ENCODE measurements at regions of chr10 and their contacts with region 1.

Region 1: GRCh38 chr10:91632671-91633550 is at the start of gene PPP1R3C:
- DNase-seq: peak; percentile 73 to 90
- H3K4me3 ChIP-seq: peak within 1 kb of the TSS; percentile 23 to 55 (median 36)
- H3K27ac ChIP-seq: no peak within 1 kb of the TSS
- H3K4me1 ChIP-seq: peaks cover 0 to 3% (median 3%) of the 10 kb centered on the region in 4 experiments; a peak in 2 of 7 replicates
- H3K27me3 ChIP-seq: peaks cover 4 to 25% (median 20%) of the 10 kb centered on the region in 4 experiments
- CTCF ChIP-seq: peak in 2 of 3 experiments; percentile 45
- EP300 ChIP-seq: no peak
- POLR2A ChIP-seq: no peak; a peak in 1 of 3 replicates
- RAD21 ChIP-seq: peak; percentile 43 to 50
- total RNA-seq, gene PPP1R3C: 1.3 and 1.7 TPM in 2 replicates

Region 2: DNA sequence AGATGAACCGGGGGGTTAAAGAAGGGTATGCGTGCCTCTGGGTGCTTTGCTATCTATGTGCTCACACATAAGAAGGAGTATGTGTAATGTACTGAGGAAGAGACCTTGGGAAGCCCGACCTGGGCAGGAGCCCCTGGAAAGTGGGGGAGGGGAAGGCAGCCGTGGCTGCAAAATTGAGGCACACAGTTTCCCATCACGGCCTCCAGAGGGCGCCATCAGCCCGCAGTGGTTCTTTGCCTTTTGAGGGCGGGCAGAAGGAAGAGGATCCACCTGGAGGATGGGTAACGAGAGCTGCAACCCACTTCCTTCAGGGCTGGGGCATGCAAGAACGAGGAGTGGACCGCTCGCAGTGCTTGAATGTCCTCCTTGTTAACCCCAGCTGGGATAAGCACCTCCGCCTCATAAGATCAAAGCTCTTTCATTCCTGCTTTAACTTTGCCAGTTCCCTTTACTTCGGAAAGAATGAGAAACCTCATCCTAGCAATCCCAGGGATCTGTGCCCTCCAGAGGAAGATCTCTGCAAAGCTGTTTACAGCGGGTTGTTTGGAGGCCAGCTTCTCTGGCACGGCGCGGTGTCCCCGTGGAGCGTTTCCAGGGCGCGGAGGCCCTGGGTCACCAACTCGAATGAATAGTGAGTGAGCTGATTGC is 334.6 kb before region 1 on chr10:
- CTCF ChIA-PET with region 1: interaction called, 47 read pairs
- POLR2A ChIA-PET with region 1: no interaction called
- DNase-seq: peak; percentile 78 to 93
- H3K4me3 ChIP-seq: peak overlapping the region; percentile 14 to 47 (median 26); a peak in 6 of 8 replicates
- H3K27ac ChIP-seq: no peak overlapping the region
- H3K4me1 ChIP-seq: peaks cover 0 to 3% (median under 1%) of the 10 kb centered on the region in 4 experiments; a peak in 1 of 7 replicates
- H3K27me3 ChIP-seq: no peaks in the 10 kb centered on the region
- CTCF ChIP-seq: peak; percentile 89 to 97 (median 95)
- EP300 ChIP-seq: no peak
- POLR2A ChIP-seq: peak in 1 of 2 experiments; percentile 38; a peak in 1 of 3 replicates
- RAD21 ChIP-seq: peak; percentile 97

Region 3: DNA sequence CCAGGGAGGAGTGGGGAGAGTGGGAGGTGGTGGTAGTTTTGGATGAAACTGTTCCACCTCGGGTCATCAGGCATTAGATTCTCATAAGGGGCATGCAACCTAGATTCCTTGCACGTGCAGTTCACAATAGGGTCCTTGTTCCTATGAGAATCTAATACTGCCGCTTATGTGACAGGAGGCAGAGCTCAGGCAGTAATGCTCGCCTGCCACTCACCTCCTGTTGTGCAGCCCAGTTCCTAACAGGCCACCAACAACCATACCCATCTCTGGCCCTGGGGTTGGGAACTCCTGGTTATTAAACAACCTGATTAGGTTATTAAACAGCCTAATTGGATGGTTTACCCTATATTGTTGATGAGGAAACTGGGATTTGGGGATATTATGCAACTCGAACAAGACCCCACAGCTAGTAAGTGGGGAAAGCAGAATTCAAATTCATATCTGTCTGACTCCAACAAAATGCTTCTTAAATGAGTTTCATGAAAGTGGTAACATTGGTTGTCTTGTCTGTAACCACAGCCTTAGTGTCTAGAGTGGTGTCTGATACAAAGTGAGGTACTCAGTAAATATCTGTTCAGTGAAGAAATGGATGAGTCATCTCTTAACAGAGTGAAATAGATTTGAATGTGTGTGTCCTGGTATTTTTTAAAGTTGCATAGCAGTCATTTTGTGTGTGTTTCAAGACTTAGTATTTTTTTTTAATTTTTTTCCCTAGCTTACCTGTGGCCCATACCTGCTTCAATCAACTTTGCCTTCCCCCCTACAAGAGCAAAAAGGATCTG is 121.2 kb before region 1 on chr10:
- CTCF ChIA-PET with region 1: no interaction called
- POLR2A ChIA-PET with region 1: no interaction called
- DNase-seq: no peak
- H3K4me3 ChIP-seq: no peak overlapping the region
- H3K27ac ChIP-seq: no peak overlapping the region
- H3K4me1 ChIP-seq: no peaks in the 10 kb centered on the region
- H3K27me3 ChIP-seq: no peaks in the 10 kb centered on the region
- CTCF ChIP-seq: no peak
- EP300 ChIP-seq: no peak
- POLR2A ChIP-seq: no peak
- RAD21 ChIP-seq: no peak

Region 4: GRCh38 chr10:91551856-91552255 is 81.1 kb before region 1 on chr10:
- CTCF ChIA-PET with region 1: interaction called, 82 read pairs
- POLR2A ChIA-PET with region 1: no interaction called
- DNase-seq: peak; percentile 66 to 76
- H3K4me3 ChIP-seq: no peak overlapping the region; a peak in 1 of 8 replicates
- H3K27ac ChIP-seq: no peak overlapping the region
- H3K4me1 ChIP-seq: no peaks in the 10 kb centered on the region; a peak in 2 of 7 replicates
- H3K27me3 ChIP-seq: no peaks in the 10 kb centered on the region
- CTCF ChIP-seq: peak; percentile 91 to 99 (median 98)
- EP300 ChIP-seq: no peak
- POLR2A ChIP-seq: no peak
- RAD21 ChIP-seq: peak; percentile 89 to 91

Region 5: GRCh38 chr10:91593834-91594233 is 39.1 kb before region 1 on chr10:
- CTCF ChIA-PET with region 1: interaction called, 10 read pairs
- POLR2A ChIA-PET with region 1: no interaction called
- DNase-seq: no peak
- H3K4me3 ChIP-seq: no peak overlapping the region
- H3K27ac ChIP-seq: no peak overlapping the region
- H3K4me1 ChIP-seq: no peaks in the 10 kb centered on the region
- H3K27me3 ChIP-seq: no peaks in the 10 kb centered on the region
- CTCF ChIP-seq: no peak
- EP300 ChIP-seq: no peak
- POLR2A ChIP-seq: no peak
- RAD21 ChIP-seq: no peak

Region 6: GRCh38 chr10:91643700-91644099 is 10.8 kb after region 1 on chr10:
- CTCF ChIA-PET with region 1: interaction called, 55 read pairs
- POLR2A ChIA-PET with region 1: interaction called, 3 read pairs
- DNase-seq: peak in 1 of 2 experiments; percentile 51
- H3K4me3 ChIP-seq: no peak overlapping the region
- H3K27ac ChIP-seq: no peak overlapping the region
- H3K4me1 ChIP-seq: no peaks in the 10 kb centered on the region
- H3K27me3 ChIP-seq: no peaks in the 10 kb centered on the region
- CTCF ChIP-seq: peak; percentile 63 to 71 (median 65)
- EP300 ChIP-seq: no peak
- POLR2A ChIP-seq: no peak
- RAD21 ChIP-seq: peak; percentile 55 to 66

Region 7: GRCh38 chr10:91665842-91666241 is 32.9 kb after region 1 on chr10:
- CTCF ChIA-PET with region 1: interaction called, 51 read pairs
- POLR2A ChIA-PET with region 1: no interaction called
- DNase-seq: no peak
- H3K4me3 ChIP-seq: no peak overlapping the region
- H3K27ac ChIP-seq: no peak overlapping the region
- H3K4me1 ChIP-seq: peaks cover 0 to 2% (median 0%) of the 10 kb centered on the region in 4 experiments; a peak in 2 of 7 replicates
- H3K27me3 ChIP-seq: no peaks in the 10 kb centered on the region
- CTCF ChIP-seq: no peak
- EP300 ChIP-seq: no peak
- POLR2A ChIP-seq: no peak
- RAD21 ChIP-seq: no peak

Region 8: GRCh38 chr10:91694170-91694794 is 61.4 kb after region 1 on chr10:
- CTCF ChIA-PET with region 1: interaction called, 53 read pairs
- POLR2A ChIA-PET with region 1: no interaction called
- DNase-seq: no peak
- H3K4me3 ChIP-seq: no peak overlapping the region
- H3K27ac ChIP-seq: no peak overlapping the region
- H3K4me1 ChIP-seq: no peaks in the 10 kb centered on the region
- H3K27me3 ChIP-seq: no peaks in the 10 kb centered on the region
- CTCF ChIP-seq: peak in 2 of 3 experiments; percentile 63 to 88; a peak in 3 of 4 replicates
- EP300 ChIP-seq: no peak
- POLR2A ChIP-seq: no peak
- RAD21 ChIP-seq: peak; percentile 85 to 87

Region 9: GRCh38 chr10:91758303-91759146 is 125.6 kb after region 1 on chr10:
- CTCF ChIA-PET with region 1: no interaction called
- POLR2A ChIA-PET with region 1: no interaction called
- DNase-seq: no peak
- H3K4me3 ChIP-seq: no peak overlapping the region
- H3K27ac ChIP-seq: no peak overlapping the region
- H3K4me1 ChIP-seq: no peaks in the 10 kb centered on the region
- H3K27me3 ChIP-seq: no peaks in the 10 kb centered on the region
- CTCF ChIP-seq: peak in 2 of 3 experiments; percentile 64 to 66; a peak in 2 of 4 replicates
- EP300 ChIP-seq: no peak
- POLR2A ChIP-seq: no peak
- RAD21 ChIP-seq: peak; percentile 93 to 95

Region 10: GRCh38 chr10:91838199-91838598 is 205.3 kb after region 1 on chr10:
- CTCF ChIA-PET with region 1: no interaction called
- POLR2A ChIA-PET with region 1: no interaction called
- DNase-seq: no peak
- H3K4me3 ChIP-seq: no peak overlapping the region
- H3K27ac ChIP-seq: no peak overlapping the region
- H3K4me1 ChIP-seq: no peaks in the 10 kb centered on the region
- H3K27me3 ChIP-seq: no peaks in the 10 kb centered on the region
- CTCF ChIP-seq: no peak
- EP300 ChIP-seq: no peak
- POLR2A ChIP-seq: no peak
- RAD21 ChIP-seq: no peak

Region 11: DNA sequence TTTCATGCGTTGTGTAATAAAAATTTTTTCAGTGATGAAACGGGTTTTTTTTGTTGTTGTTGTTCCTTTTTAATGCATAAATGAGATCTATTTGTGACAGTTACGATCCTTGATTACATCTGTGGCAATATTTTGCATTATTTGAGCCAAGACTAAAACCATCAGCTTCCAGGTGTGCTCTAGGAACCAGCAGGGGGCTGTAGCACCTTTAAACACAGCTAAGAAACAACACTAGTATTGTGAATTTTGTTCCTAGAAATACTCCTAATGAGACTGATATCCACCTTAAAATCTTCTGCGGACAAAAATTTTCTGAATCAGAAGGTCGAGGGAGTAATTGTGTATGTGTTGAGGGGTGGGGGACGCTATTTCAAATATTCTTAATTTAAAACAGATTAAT is 223.7 kb after region 1 on chr10:
- CTCF ChIA-PET with region 1: no interaction called
- POLR2A ChIA-PET with region 1: no interaction called
- DNase-seq: no peak
- H3K4me3 ChIP-seq: no peak overlapping the region
- H3K27ac ChIP-seq: no peak overlapping the region
- H3K4me1 ChIP-seq: no peaks in the 10 kb centered on the region
- H3K27me3 ChIP-seq: no peaks in the 10 kb centered on the region
- CTCF ChIP-seq: peak in 2 of 3 experiments; percentile 42; a peak in 2 of 4 replicates
- EP300 ChIP-seq: no peak
- POLR2A ChIP-seq: no peak
- RAD21 ChIP-seq: peak; percentile 61 to 70